BJ (cell line): ENCODE measurements at regions of chr6 and their contacts with region 1.

Region 1: GRCh38 chr6:144912474-144912873 is 627.3 kb downstream of the UTRN start:
- DNase-seq: peak; percentile 67
- H3K4me3 ChIP-seq: no peak overlapping the region
- H3K27me3 ChIP-seq: no peaks in the 10 kb centered on the region
- CTCF ChIP-seq: peak; percentile 25; the same call in 1 of the 2 replicates

Region 2: DNA sequence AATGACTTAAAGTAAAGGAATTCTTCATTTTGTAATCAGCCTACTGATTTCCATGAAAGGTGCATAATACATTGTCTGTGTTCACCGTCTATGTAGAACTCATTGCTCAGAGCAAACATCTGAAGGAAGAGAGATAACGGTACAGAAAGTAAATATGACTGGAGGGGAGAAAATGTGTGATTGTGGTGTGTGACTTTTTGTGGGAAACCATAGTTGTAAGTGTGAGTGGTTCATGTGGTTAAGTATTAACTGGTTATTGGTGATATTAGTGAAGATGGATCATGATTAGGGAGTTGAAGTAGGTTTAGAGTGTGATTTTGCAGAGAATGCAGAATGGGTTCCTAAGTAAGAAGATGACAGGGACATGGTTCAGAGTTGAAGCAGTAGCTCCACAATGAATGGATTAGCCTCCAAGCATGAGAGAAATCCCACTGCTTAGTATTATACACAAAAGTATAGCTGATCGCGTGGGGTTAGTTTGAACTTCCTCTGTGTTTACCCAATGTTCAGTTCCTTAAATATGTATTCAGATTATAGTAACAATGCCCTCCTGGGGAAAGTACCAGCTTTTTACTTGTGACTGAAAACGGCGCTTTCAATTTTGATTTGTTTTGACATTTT is 258.5 kb before region 1 on chr6:
- CTCF ChIA-PET with region 1: no interaction called
- POLR2A ChIA-PET with region 1: no interaction called
- DNase-seq: no peak
- H3K4me3 ChIP-seq: no peak overlapping the region
- H3K27me3 ChIP-seq: no peaks in the 10 kb centered on the region
- CTCF ChIP-seq: no peak

Region 3: DNA sequence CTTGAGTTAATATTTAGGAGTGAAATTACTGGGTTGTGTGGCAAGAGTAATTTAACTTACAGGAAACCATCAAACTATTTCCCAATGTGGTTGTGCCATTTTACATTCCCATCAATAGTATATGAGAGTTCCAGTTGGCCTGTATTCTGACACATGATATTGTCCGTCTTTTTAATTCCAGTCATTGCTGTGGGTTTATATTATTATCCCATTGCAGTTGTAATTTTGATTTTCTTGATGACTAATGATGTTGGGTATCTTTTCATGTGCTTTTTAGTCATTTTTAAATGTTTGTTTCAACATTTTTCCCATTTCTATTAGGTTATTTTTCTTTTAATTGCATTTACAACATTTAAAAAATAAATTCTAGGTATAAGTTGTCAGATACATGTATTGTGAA is 13.3 kb before region 1 on chr6:
- CTCF ChIA-PET with region 1: no interaction called
- POLR2A ChIA-PET with region 1: interaction called, 12 read pairs
- DNase-seq: peak; percentile 86
- H3K4me3 ChIP-seq: no peak overlapping the region
- H3K27me3 ChIP-seq: no peaks in the 10 kb centered on the region
- CTCF ChIP-seq: no peak